Heart left ventricle (tissue), 16 donors: ENCODE measurements at regions of chr7 and their contacts with region 1.

Region 1: GRCh38 chr7:78379148-78379547 is 580.6 kb downstream of the PHTF2 start:
- DNase-seq: no peak
- ATAC-seq: no peak
- H3K4me3 ChIP-seq: no peak overlapping the region
- H3K27ac ChIP-seq: no peak overlapping the region
- H3K4me1 ChIP-seq: no peaks in the 10 kb centered on the region
- H3K27me3 ChIP-seq: no peaks in the 10 kb centered on the region
- CTCF ChIP-seq: no peak
- POLR2A ChIP-seq: no peak

Region 2: GRCh38 chr7:78686189-78686588 is 307.0 kb after region 1 on chr7:
- intact Hi-C with region 1: loop called in 1 of 10 experiments (anchors 10 kb)
- DNase-seq: no peak
- ATAC-seq: no peak
- H3K4me3 ChIP-seq: no peak overlapping the region
- H3K27ac ChIP-seq: no peak overlapping the region
- H3K4me1 ChIP-seq: no peaks in the 10 kb centered on the region
- H3K27me3 ChIP-seq: no peaks in the 10 kb centered on the region
- CTCF ChIP-seq: no peak
- POLR2A ChIP-seq: no peak